PC-9 (cell line): ENCODE measurements at regions of chr1 and their contacts with region 1.

Region 1: GRCh38 chr1:22704440-22705067 is 6.1 kb upstream of the EPHB2 start:
- DNase-seq: peak; percentile 66 to 78
- H3K4me3 ChIP-seq: no peak overlapping the region
- H3K27ac ChIP-seq: no peak overlapping the region
- H3K4me1 ChIP-seq: no peaks in the 10 kb centered on the region
- H3K27me3 ChIP-seq: no peaks in the 10 kb centered on the region
- CTCF ChIP-seq: peak; percentile 81

Region 2: DNA sequence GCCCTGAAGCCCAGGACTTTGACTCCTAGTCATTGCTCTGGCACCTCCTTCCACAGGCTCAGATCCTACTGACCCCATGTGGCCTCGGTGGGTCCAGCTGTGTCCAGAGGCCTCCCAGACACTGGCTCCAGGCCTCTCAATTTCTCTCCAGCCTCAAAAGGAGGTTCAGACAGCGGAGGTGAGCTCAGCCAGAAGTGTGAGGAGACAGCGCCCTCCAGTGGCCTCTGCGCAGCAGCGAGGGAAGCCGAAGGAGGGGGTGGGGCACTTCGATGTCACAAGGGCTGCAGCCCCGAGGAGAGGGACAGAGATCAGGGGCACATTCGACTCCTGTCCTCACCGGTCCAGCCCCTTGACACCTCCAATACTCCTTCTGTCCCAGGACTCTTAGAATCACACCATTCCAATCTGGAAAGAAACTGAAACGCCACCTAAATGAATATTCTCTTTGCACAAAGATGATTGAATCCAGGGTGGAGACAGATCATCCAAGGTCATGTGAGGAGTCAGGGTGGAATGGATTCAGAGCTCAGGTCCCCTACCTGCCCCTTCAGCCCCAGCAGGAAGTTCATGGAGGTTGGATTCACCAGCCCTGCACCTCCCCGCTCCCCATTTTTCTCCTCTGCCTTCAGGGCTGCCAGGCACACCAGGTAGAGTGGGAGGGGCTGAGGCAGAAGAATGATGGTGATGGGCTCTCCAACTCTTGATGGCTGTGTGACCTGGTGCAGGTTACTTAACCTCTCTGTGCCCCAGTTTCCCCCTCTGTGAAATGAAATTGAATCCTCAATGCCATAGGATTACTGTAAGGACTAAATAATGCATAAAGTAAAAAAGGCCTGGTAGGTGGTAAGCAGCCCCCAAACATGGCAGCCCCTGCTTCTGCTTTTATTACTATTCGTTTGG is 287.7 kb before region 1 on chr1:
- CTCF ChIA-PET with region 1: no interaction called
- POLR2A ChIA-PET with region 1: no interaction called
- intact Hi-C with region 1: no loop called
- DNase-seq: peak; percentile 51 to 80
- H3K4me3 ChIP-seq: no peak overlapping the region
- H3K27ac ChIP-seq: no peak overlapping the region
- H3K4me1 ChIP-seq: peaks cover 29% of the 10 kb centered on the region
- H3K27me3 ChIP-seq: no peaks in the 10 kb centered on the region
- CTCF ChIP-seq: peak; percentile 92

Region 3: GRCh38 chr1:22673486-22674409 is 30.8 kb before region 1 on chr1:
- CTCF ChIA-PET with region 1: interaction called, 4 read pairs
- POLR2A ChIA-PET with region 1: no interaction called
- intact Hi-C with region 1: loop called (anchors 1 kb)
- DNase-seq: peak in 1 of 2 experiments; percentile 64
- H3K4me3 ChIP-seq: no peak overlapping the region
- H3K27ac ChIP-seq: no peak overlapping the region
- H3K4me1 ChIP-seq: no peaks in the 10 kb centered on the region
- H3K27me3 ChIP-seq: no peaks in the 10 kb centered on the region
- CTCF ChIP-seq: peak; percentile 81

Region 4: GRCh38 chr1:22689505-22689904 is 15.0 kb before region 1 on chr1:
- CTCF ChIA-PET with region 1: interaction called, 10 read pairs
- POLR2A ChIA-PET with region 1: no interaction called
- intact Hi-C with region 1: loop called (anchors 2 kb)
- DNase-seq: peak; percentile 84 to 94
- H3K4me3 ChIP-seq: no peak overlapping the region
- H3K27ac ChIP-seq: peak overlapping the region; percentile 46; the same call in 1 of the 2 replicates
- H3K4me1 ChIP-seq: peaks cover 11% of the 10 kb centered on the region
- H3K27me3 ChIP-seq: no peaks in the 10 kb centered on the region
- CTCF ChIP-seq: no peak

Region 5: DNA sequence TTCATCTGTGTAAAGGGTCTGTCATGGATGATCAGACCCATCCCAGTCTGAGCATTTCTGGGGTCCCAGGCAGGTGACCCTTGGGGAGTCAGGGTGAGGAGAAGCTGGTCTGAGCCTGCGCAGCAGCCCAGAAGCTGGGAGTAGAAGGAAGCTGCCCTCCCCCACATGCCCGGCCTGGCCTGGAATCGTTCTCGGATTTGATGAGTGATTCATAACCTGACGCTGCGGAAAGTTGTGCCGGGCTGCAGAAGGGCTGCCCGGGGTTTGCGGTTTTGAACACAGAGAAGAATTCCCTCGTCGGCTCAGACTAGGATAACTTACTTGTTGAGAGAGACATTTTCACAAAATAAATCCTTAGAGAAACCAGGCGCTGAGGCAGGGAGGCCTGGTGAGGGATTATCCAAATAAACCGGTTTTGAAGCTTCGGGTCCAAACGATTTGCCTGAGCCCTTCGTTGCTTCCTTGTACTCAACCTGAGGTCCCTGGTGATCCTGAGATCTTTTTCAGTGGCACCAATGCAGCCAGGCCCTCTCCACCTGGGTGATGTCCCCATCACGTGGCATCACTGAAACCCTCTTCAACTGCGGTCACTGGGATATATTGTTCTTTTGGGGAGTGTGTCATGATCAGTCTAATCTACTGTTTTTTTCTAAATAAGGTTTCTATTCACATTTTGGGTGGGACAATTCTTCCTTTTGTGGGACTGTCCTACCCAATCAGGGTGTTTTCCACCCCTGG is 35.3 kb after region 1 on chr1:
- CTCF ChIA-PET with region 1: no interaction called
- POLR2A ChIA-PET with region 1: no interaction called
- intact Hi-C with region 1: loop called (anchors 1 kb)
- DNase-seq: no peak
- H3K4me3 ChIP-seq: no peak overlapping the region
- H3K27ac ChIP-seq: no peak overlapping the region
- H3K4me1 ChIP-seq: no peaks in the 10 kb centered on the region
- H3K27me3 ChIP-seq: no peaks in the 10 kb centered on the region
- CTCF ChIP-seq: no peak

Region 6: DNA sequence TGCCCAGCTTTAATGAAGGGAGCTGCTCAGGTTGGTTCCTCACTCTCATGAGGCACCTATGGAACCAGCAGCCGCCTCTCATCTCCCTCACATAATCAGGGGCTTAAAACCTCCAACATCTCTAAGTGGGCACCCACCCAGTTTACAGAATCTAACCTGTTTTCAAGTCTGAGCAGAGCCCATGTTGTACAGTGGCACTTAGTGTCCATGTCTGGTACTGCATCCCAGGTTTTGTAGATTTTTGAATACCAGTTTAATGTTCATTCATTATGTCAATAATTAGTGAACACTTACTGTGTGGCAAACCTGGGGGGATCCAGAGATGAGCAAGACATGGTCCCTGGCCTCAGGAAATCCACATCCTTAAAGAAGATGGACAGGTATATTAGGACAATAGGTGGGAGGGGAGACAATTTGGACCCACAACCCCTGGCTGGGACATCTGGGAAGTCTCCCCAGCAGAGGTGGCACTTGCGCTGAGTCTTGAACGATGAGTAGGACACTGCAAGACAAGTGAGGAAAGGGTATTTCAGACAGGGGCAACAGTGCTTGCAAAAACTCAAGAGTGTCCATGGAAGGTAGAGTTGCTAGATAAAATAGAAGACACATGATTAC is 184.8 kb after region 1 on chr1:
- CTCF ChIA-PET with region 1: interaction called, 3 read pairs
- POLR2A ChIA-PET with region 1: no interaction called
- intact Hi-C with region 1: loop called (anchors 1 kb)
- DNase-seq: peak in 1 of 2 experiments; percentile 12
- H3K4me3 ChIP-seq: no peak overlapping the region
- H3K27ac ChIP-seq: no peak overlapping the region
- H3K4me1 ChIP-seq: no peaks in the 10 kb centered on the region
- H3K27me3 ChIP-seq: no peaks in the 10 kb centered on the region
- CTCF ChIP-seq: peak; percentile 85

Region 7: GRCh38 chr1:23838401-23838866 is 1133.9 kb after region 1 on chr1:
- CTCF ChIA-PET with region 1: no interaction called
- POLR2A ChIA-PET with region 1: interaction called, 29 read pairs
- intact Hi-C with region 1: no loop called
- DNase-seq: peak in 1 of 2 experiments; percentile 55
- H3K4me3 ChIP-seq: peak overlapping the region; percentile 54
- H3K27ac ChIP-seq: no peak overlapping the region
- H3K4me1 ChIP-seq: no peaks in the 10 kb centered on the region
- H3K27me3 ChIP-seq: no peaks in the 10 kb centered on the region
- CTCF ChIP-seq: no peak